ENCODE measurements at regions of chr3 and their contacts with region 1.

Region 1: GRCh38 chr3:17841190-17841828 is 98.9 kb upstream of the TBC1D5 start:
- DNase-seq: peak; percentile 74
- H3K4me3 ChIP-seq: no peak overlapping the region
- H3K27ac ChIP-seq: no peak overlapping the region
- H3K4me1 ChIP-seq: no peaks in the 10 kb centered on the region
- H3K27me3 ChIP-seq: no peaks in the 10 kb centered on the region
- CTCF ChIP-seq: peak; percentile 91

Region 2: DNA sequence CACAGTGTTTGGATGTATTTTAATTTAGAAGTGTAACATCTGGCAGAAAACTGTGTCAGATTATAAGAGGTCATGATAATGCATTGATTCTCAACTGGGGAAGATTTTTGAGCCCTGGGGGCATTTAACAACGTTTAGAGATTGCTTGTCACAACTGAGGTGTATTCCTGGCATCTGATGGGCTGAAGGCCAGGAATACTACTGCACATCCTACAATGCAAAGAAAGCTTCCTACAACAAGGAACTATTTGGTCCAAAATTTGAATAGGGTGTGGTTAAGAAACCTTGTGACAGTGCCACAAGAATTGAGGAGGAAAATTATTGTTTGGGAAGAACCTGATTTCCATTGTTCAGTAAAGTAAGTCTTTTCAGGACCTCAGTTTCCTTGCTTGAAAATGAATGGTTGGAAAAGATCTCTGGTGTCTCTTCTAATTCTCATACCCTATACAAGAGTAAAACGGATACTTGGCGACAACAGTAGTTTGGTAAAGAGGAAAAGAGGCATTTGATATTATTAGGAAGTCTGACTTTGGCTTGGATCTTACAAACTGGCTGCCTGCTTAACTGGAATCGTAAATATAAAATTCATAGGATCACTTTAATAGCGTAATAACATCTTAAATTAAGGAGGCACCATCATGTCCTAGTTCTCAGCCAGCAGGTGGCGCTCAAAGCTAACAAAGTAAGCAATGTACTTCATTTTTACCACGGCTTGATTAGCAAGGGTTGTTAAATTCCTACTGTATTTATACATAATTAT is 1240.3 kb before region 1 on chr3:
- intact Hi-C with region 1: loop called (anchors 10 kb)
- DNase-seq: peak; percentile 73
- H3K4me3 ChIP-seq: no peak overlapping the region
- H3K27ac ChIP-seq: no peak overlapping the region
- H3K4me1 ChIP-seq: no peaks in the 10 kb centered on the region
- H3K27me3 ChIP-seq: no peaks in the 10 kb centered on the region
- CTCF ChIP-seq: peak; percentile 79

Region 3: GRCh38 chr3:17258823-17259436 is 582.4 kb before region 1 on chr3:
- intact Hi-C with region 1: loop called (anchors 10 kb)
- DNase-seq: no peak
- H3K4me3 ChIP-seq: no peak overlapping the region
- H3K27ac ChIP-seq: no peak overlapping the region
- H3K4me1 ChIP-seq: no peaks in the 10 kb centered on the region
- H3K27me3 ChIP-seq: no peaks in the 10 kb centered on the region
- CTCF ChIP-seq: peak; percentile 71

Region 4: GRCh38 chr3:17431004-17431403 is 410.3 kb before region 1 on chr3:
- intact Hi-C with region 1: loop called (anchors 5 kb)
- DNase-seq: no peak
- H3K4me3 ChIP-seq: no peak overlapping the region
- H3K27ac ChIP-seq: no peak overlapping the region
- H3K4me1 ChIP-seq: no peaks in the 10 kb centered on the region
- H3K27me3 ChIP-seq: no peaks in the 10 kb centered on the region
- CTCF ChIP-seq: peak; percentile 36

Region 5: GRCh38 chr3:17605032-17605431 is 236.3 kb before region 1 on chr3:
- intact Hi-C with region 1: no loop called
- DNase-seq: no peak
- H3K4me3 ChIP-seq: no peak overlapping the region
- H3K27ac ChIP-seq: no peak overlapping the region
- H3K4me1 ChIP-seq: no peaks in the 10 kb centered on the region
- H3K27me3 ChIP-seq: no peaks in the 10 kb centered on the region
- CTCF ChIP-seq: no peak

Region 6: DNA sequence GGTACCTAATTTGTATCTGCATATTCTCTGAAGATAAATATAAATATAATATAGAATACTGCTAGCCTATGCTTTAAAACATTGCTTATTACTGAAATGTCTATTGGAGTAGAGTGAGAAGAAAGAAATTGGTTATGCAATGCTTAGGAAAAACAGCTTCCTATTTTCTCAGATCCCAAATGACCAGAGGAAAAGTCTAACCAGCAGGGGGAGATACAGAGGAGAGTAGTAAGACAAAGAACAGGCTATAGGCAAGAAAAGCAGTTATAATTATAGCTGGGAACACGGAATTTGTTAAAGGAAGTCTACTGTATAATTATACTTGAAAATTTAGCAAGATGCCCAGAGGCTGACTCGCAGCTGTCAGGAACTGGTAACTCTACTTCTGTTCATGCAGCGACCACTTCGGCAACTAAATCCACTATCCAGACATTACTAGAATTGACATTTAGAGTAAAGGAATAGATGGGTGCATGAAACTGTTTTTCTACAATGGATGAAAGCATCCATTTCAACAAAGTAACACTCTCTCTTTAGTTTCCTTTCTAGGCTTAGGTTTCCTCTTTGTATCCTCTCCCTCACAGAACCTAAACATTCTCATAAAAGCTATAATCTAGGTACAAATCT is 196.1 kb before region 1 on chr3:
- intact Hi-C with region 1: loop called (anchors 2 kb)
- DNase-seq: peak; percentile 50
- H3K4me3 ChIP-seq: no peak overlapping the region
- H3K27ac ChIP-seq: no peak overlapping the region
- H3K4me1 ChIP-seq: no peaks in the 10 kb centered on the region
- H3K27me3 ChIP-seq: no peaks in the 10 kb centered on the region
- CTCF ChIP-seq: peak; percentile 62